GM10248 (cell line): ENCODE measurements at regions of chr1 and their contacts with region 1.

Region 1: GRCh38 chr1:33633019-33633801 is 160.8 kb downstream of the ZSCAN20 start:
- DNase-seq: peak; percentile 84
- CTCF ChIP-seq: peak; percentile 98

Region 2: GRCh38 chr1:33482412-33482811 is 150.8 kb before region 1 on chr1:
- CTCF ChIA-PET with region 1: no interaction called
- POLR2A ChIA-PET with region 1: no interaction called
- DNase-seq: no peak
- CTCF ChIP-seq: no peak

Region 3: DNA sequence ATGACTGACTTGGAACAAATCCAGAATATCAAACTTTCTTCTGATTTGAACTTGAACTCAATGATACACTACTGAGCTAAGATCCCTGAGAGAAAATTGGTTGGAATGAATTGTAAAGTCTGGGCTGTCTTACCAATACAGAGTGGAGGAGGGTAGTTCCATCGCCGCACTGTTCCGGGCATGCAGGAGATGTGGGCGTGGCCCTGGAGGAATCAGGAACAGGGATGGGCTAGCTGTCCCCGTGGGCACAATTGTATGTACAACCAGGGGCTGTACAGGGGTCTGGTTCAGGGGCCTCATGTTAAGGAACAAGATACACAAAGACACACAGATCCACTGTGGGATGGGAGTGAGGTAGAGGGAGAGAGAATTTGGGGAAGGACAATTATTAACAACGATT is 16.4 kb before region 1 on chr1:
- CTCF ChIA-PET with region 1: interaction called, 12 read pairs
- POLR2A ChIA-PET with region 1: no interaction called
- DNase-seq: no peak
- CTCF ChIP-seq: no peak

Region 4: DNA sequence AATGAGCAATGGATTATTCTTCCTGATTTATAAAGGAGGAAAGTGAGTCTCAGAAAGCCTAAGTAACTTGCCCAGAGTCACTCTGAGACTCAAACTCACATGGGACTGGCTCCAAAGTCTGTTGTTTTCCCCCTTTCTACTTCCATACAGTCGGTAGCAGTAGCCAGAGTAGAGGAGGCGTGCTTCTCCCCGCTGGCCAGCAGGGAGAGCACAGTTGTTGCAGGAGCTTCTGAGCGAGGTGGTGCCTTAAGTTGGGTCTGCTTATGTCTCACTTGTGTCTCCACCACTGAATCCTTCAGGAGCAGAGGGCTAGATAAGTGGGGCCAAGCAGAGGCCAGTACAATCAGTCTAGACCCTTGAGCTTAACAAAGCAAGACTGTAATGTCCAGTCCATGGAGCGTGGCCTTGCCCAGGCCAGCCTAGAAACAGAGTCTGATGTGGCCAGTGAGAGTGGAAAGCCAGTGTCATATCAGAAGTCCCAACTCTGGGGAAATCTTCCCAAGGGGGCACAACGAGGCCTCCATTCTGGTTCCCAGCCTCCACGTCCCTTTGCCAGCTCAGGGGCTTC is 21.1 kb after region 1 on chr1:
- CTCF ChIA-PET with region 1: interaction called, 14 read pairs
- POLR2A ChIA-PET with region 1: no interaction called
- DNase-seq: no peak
- CTCF ChIP-seq: peak; percentile 19

Region 5: GRCh38 chr1:33686551-33686950 is 53.3 kb after region 1 on chr1:
- CTCF ChIA-PET with region 1: no interaction called
- POLR2A ChIA-PET with region 1: no interaction called
- DNase-seq: no peak
- CTCF ChIP-seq: no peak

Region 6: DNA sequence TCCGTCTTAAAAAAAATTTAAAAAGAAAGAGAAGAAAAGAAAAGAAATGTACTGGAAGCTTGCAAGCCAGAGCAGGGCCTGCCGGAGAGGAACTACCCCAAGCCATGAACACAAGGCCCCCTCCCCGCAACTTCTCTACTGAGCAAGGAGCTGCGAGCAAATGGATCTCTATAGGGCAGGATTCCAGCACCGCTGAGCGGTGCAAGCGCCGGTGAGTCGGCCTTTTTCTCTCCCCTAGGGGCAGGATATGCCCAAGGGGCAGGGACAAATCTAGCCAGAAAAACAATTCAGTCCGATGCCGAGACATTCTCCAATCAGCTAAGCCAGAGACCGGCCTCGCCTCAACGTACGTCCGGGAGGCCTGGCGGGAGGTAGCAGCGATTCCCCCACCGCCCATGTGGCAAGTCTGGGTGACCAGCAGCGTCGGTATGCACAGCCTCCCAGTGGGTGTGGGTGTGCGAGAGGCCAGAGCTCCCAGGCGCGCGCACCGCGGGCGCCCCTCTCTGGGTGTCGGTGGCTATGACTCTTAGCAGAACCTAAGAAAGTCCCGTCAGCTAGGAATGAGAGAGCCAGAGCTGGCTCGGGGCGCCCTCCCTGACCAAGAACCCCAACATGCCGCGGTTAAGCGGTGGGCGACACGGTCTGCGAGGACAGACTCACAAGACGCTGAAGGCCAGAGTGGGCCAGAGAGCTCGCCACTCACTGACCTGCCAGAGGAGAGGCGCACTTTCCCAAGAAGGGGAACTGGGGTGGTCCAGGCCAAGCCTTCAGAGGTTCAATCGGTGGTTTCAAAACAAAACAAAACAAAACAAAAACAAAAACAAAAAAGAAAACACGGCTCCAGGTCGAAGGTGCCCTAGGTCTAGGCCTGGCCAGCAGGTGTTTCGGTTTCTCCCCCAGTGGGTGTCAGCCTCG is 529.9 kb after region 1 on chr1:
- CTCF ChIA-PET with region 1: interaction called, 26 read pairs
- POLR2A ChIA-PET with region 1: no interaction called
- DNase-seq: peak; percentile 79
- CTCF ChIP-seq: peak; percentile 49

Region 7: DNA sequence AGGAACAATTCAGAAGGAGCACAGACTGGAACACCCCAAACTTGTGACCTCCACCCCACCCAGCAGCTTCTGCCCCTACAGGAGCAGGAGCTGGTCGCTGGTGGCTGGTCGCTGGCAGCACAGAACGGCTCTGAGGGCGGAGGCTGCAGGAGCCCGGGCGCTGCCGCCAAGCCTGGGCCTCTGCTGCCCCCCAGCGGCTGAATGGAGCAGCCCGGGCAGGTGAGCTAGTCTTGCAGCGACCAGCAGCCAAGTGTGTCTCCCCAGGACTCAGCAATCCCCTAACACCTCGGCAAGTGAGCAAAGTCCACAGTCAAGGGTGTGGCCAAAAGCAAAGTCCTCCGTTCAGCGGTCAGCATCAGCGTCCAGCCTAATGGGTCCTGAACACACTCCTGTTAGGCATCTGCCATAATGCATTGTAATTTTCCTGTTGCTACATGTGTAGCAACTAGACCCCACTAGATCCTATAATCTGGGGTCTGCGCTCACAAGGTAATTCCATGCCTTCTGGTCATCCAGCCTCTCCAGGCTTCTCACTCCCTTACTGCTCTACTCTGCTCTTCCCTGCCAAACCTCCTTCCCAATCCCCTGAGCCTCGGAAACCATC is 1109.6 kb after region 1 on chr1:
- CTCF ChIA-PET with region 1: interaction called, 31 read pairs
- POLR2A ChIA-PET with region 1: no interaction called
- DNase-seq: peak; percentile 90
- CTCF ChIP-seq: peak; percentile 97